ENCODE measurements at regions of chr6 and their contacts with region 1.

Region 1: DNA sequence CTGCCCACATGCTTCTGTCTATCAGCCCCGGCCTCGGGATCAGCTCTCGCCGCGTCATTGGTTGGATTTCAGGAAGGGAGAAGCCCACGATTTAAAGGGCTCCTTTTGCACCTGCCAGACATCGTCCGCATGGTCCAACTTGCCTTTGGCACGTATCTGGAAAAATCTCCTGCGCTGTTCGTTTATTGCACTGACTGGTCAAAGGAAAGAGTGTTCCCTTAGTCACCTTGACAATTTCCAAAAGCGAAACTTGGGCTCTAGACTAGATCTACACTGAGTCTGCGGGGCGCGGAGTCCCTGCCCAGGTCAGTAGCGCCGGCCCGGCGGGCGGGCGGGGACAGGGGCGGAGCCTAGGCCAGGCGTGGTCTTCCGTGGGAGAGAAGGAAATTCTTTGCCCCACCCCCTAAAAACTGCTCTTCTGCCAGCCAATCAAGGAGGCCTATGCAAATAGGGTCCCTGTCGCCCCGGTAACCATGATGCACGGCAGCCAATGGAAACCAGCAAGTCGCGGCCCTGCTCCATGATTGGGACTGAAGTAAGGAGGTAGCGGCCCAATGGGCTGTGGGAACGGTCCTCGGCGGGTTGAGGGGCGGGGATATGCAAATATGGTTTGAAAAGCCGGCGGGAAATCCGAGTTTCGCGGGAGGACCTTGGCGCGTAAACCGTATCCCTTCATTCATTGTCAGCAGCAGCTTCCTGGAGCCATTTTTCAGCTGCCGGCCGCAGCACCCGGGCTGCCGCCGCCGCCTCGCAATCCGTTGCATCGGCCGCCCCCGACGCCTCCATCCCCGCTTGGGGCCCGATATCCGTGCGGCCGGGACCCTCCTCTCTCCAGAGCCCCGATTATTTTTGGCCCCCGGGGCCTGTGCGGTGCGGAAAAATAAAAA is at the start of gene E2F3:
- DNase-seq: peak; percentile 98 to 100
- ATAC-seq: peak; percentile 93 to 97 (median 96)
- H3K4me3 ChIP-seq: peak within 1 kb of the TSS; percentile 50 to 90 (median 76)
- H3K27ac ChIP-seq: peak within 1 kb of the TSS; percentile 55 to 98 (median 91)
- H3K4me1 ChIP-seq: peaks cover 0 to 28% (median 9%) of the 10 kb centered on the region in 9 donors
- H3K27me3 ChIP-seq: no peaks in the 10 kb centered on the region
- CTCF ChIP-seq: no peak
- total RNA-seq, gene E2F3: 6.1 to 11.9 (median 8.1) TPM

Region 2: DNA sequence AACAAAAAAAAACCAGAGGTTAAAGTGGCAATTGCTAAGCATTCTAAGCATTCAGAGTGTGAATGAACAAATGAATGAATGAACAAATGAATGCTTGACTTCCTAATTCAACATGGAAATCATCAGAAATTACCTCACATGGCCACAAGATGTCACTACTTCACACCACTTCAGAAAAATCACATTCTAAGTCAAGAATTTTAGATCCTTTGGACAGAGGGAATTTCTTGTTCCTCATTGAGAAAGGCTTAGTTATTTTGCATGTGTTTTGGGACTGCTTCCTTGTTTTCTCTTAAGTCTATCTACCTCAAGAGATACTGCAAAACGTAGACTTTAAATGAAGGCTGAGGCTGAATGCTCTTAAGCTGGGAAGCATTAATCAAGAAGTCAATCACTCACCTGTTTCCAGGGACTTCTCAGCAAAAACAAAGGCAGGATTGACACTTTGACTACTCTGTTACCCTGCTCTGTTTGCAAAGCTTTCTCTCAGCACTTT is 309.3 kb before region 1 on chr6:
- intact Hi-C with region 1: loop called in 1 of 10 experiments (anchors 10 kb)
- DNase-seq: no peak
- ATAC-seq: no peak
- H3K4me3 ChIP-seq: no peak overlapping the region
- H3K27ac ChIP-seq: no peak overlapping the region
- H3K4me1 ChIP-seq: peaks cover 0 to 4% (median 0%) of the 10 kb centered on the region in 9 donors
- H3K27me3 ChIP-seq: no peaks in the 10 kb centered on the region
- CTCF ChIP-seq: peak; percentile 47 to 77 (median 74)

Region 3: DNA sequence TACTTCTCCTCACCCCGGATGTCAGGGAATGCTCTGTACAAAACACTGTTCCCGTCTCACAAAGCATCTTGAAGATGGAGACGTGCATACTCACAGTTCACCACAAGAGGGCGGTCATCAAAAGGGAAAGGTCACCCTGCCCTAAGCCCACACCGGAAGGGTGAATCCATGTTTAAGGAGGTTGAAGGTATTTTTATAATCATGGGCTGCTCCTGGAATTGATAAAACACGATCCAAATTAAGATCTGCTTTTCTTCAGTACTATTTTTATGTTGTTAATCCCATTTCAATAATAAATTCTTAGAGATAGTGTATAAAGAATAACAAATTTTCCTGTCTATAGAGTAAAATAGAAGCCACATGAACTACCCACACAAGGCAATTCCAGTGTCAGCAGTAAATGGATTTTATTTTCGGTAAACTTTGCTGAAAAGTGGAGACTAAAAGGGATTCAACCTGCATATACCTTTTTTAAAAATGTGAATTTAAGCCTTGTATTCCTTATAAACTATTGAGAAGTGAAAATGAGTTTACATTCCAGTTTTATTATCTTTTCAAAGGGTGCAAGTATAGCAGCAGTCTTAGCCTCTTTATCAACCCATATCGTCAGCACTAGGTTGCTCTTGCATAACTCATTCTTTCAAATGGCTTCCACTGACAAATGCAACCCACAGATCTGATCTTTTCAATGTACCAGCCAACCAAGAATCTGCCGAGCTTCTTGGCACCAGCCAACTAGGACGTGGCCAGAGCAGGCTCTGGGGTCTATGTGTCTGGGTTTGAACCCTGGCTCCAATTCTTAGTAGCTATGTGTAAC is 109.5 kb before region 1 on chr6:
- intact Hi-C with region 1: loop called in 6 of 10 experiments (anchors 5 to 10 kb)
- DNase-seq: peak; percentile 24 to 80
- ATAC-seq: peak; percentile 78 to 93 (median 86)
- H3K4me3 ChIP-seq: no peak overlapping the region
- H3K27ac ChIP-seq: no peak overlapping the region
- H3K4me1 ChIP-seq: peaks cover 0 to 9% (median 3%) of the 10 kb centered on the region in 9 donors
- H3K27me3 ChIP-seq: no peaks in the 10 kb centered on the region
- CTCF ChIP-seq: peak; percentile 81 to 96 (median 93)

Region 4: DNA sequence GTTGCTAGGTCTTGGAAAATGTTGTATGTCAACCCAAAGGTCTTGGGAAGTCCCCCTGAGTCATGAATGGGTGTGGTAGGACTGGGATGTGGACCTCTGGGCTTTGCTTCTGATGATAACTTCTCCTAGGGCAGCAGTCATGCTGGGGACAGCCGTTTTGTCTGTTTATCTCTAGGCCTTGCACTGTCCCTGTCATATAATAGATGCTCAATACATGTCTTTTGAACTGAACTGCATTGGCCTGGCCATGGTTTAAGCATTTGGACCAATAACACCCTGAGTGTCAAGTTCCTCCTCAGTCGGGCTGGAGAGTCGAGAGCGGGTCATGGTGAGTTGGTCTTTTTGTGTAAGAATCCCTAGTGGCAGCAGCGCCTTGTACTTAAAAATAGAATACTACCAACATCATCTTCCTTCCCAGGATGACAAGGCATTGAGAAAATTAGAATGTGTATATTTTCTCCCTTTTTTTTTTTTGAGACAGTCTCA is 43.4 kb after region 1 on chr6:
- intact Hi-C with region 1: loop called in 1 of 10 experiments (anchors 5 kb)
- DNase-seq: no peak
- ATAC-seq: peak in 2 of 8 donors; percentile 23 to 37
- H3K4me3 ChIP-seq: no peak overlapping the region
- H3K27ac ChIP-seq: no peak overlapping the region
- H3K4me1 ChIP-seq: peaks cover 0 to 37% (median 0%) of the 10 kb centered on the region in 9 donors
- H3K27me3 ChIP-seq: no peaks in the 10 kb centered on the region
- CTCF ChIP-seq: no peak

Region 5: GRCh38 chr6:20534295-20535262 is 133.1 kb after region 1 on chr6 and contains the start of gene CDKAL1:
- intact Hi-C with region 1: loop called (anchors 2 to 10 kb)
- DNase-seq: peak; percentile 87 to 94
- ATAC-seq: peak; percentile 88 to 96 (median 94)
- H3K4me3 ChIP-seq: peak within 1 kb of the TSS; percentile 68 to 100 (median 88)
- H3K27ac ChIP-seq: peak within 1 kb of the TSS in 9 of 10 donors; percentile 72 to 93 (median 84)
- H3K4me1 ChIP-seq: peaks cover 0 to 19% (median 17%) of the 10 kb centered on the region in 9 donors
- H3K27me3 ChIP-seq: no peaks in the 10 kb centered on the region
- CTCF ChIP-seq: no peak
- total RNA-seq, gene CDKAL1: 10.4 to 14.0 (median 11.1) TPM

Region 6: DNA sequence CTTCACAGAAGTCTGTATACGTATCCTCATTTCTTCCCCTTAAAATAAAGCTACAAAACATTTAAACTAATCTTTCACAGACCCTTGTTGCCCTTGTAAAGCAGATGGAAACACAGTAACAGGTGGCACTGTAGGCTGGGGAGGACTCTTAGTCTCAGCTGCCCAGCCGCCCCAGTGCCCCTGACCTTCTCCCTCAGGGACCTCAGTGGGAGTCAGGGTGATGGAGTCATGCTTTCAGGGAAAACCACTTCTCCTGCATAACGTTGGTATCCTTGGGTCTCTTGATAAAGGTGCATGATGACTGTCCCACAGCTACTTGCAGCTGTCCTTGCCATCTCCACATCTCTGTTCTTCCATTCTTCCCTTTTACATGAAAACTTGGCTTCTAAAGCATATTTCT is 331.4 kb after region 1 on chr6:
- intact Hi-C with region 1: no loop called
- DNase-seq: no peak
- ATAC-seq: no peak
- H3K4me3 ChIP-seq: no peak overlapping the region
- H3K27ac ChIP-seq: no peak overlapping the region
- H3K4me1 ChIP-seq: no peaks in the 10 kb centered on the region
- H3K27me3 ChIP-seq: no peaks in the 10 kb centered on the region
- CTCF ChIP-seq: no peak